ENCODE measurements at regions of chr10 and their contacts with region 1.

Region 1: GRCh38 chr10:17216217-17216900 is 11.7 kb upstream of the VIM start:
- DNase-seq: peak; percentile 72
- ATAC-seq: peak; percentile 98
- H3K4me3 Mint-ChIP-seq: peak overlapping the region; percentile 44
- H3K27ac Mint-ChIP-seq: peak overlapping the region; percentile 96
- H3K4me1 Mint-ChIP-seq: peaks cover 66% of the 10 kb centered on the region
- H3K27me3 Mint-ChIP-seq: no peaks in the 10 kb centered on the region

Region 2: GRCh38 chr10:17200912-17201793 is 15.2 kb before region 1 on chr10 and contains the start of gene TRDMT1:
- CTCF ChIA-PET with region 1: interaction called, 21 read pairs
- DNase-seq: peak; percentile 83
- ATAC-seq: peak; percentile 96
- H3K4me3 Mint-ChIP-seq: peak within 1 kb of the TSS; percentile 93
- H3K27ac Mint-ChIP-seq: peak within 1 kb of the TSS; percentile 87
- H3K4me1 Mint-ChIP-seq: peaks cover 55% of the 10 kb centered on the region
- H3K27me3 Mint-ChIP-seq: no peaks in the 10 kb centered on the region
- total RNA-seq, gene TRDMT1: 7.7 to 9.2 TPM

Region 3: GRCh38 chr10:17206210-17206709 is 10.1 kb before region 1 on chr10:
- CTCF ChIA-PET with region 1: interaction called, 21 read pairs
- DNase-seq: peak; percentile 66
- ATAC-seq: peak; percentile 79
- H3K4me3 Mint-ChIP-seq: peak overlapping the region; percentile 31
- H3K27ac Mint-ChIP-seq: peak overlapping the region; percentile 81
- H3K4me1 Mint-ChIP-seq: peaks cover 58% of the 10 kb centered on the region
- H3K27me3 Mint-ChIP-seq: no peaks in the 10 kb centered on the region

Region 4: GRCh38 chr10:17228091-17228940 is 12.0 kb after region 1 on chr10 and contains the start of gene VIM:
- CTCF ChIA-PET with region 1: interaction called, 42 read pairs
- DNase-seq: peak; percentile 96
- ATAC-seq: peak; percentile 44
- H3K4me3 Mint-ChIP-seq: peak within 1 kb of the TSS; percentile 93
- H3K27ac Mint-ChIP-seq: peak within 1 kb of the TSS; percentile 97
- H3K4me1 Mint-ChIP-seq: peaks cover 46% of the 10 kb centered on the region
- H3K27me3 Mint-ChIP-seq: no peaks in the 10 kb centered on the region
- total RNA-seq, gene VIM: 1,771 to 2,143 TPM